A673 (cell line): ENCODE measurements at regions of chr7 and their contacts with region 1.

Region 1: GRCh38 chr7:158907390-158907789 is 51.0 kb downstream of the DYNC2I1 start:
- DNase-seq: no peak
- H3K4me3 ChIP-seq: no peak overlapping the region
- H3K27ac ChIP-seq: no peak overlapping the region
- H3K4me1 ChIP-seq: no peaks in the 10 kb centered on the region
- H3K27me3 ChIP-seq: no peaks in the 10 kb centered on the region
- CTCF ChIP-seq: no peak

Region 2: DNA sequence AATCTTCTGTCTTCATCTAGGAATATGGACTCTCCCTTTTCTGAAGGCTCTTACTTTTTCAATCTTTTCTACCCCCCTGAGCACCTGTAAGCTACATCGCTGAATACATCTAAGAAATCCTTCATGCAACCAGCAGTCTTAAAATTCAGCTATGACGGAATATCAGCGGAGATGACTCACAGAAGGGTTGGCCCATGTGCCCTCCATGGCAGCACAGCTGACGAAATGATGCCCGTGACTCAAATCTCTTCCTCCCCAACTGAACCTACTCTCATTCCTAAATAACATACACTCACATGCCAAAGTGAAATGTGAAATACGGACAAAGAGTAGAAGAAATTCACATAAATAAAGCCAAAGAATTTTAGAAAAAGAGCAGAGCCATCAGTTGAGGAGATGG is 172.5 kb before region 1 on chr7:
- CTCF ChIA-PET with region 1: no interaction called
- POLR2A ChIA-PET with region 1: interaction called, 19 read pairs
- intact Hi-C with region 1: no loop called
- DNase-seq: no peak
- H3K4me3 ChIP-seq: no peak overlapping the region
- H3K27ac ChIP-seq: no peak overlapping the region
- H3K4me1 ChIP-seq: peaks cover 11% of the 10 kb centered on the region
- H3K27me3 ChIP-seq: no peaks in the 10 kb centered on the region
- CTCF ChIP-seq: no peak

Region 3: GRCh38 chr7:158863611-158864506 is 43.5 kb before region 1 on chr7:
- CTCF ChIA-PET with region 1: no interaction called
- POLR2A ChIA-PET with region 1: no interaction called
- intact Hi-C with region 1: no loop called
- DNase-seq: peak; percentile 35
- H3K4me3 ChIP-seq: peak overlapping the region; percentile 42
- H3K27ac ChIP-seq: peak overlapping the region; percentile 63
- H3K4me1 ChIP-seq: peaks cover 3% of the 10 kb centered on the region
- H3K27me3 ChIP-seq: no peaks in the 10 kb centered on the region
- CTCF ChIP-seq: no peak

Region 4: GRCh38 chr7:159036916-159037605 is 129.7 kb after region 1 on chr7:
- CTCF ChIA-PET with region 1: no interaction called
- POLR2A ChIA-PET with region 1: no interaction called
- intact Hi-C with region 1: no loop called
- DNase-seq: no peak
- H3K4me3 ChIP-seq: no peak overlapping the region
- H3K27ac ChIP-seq: no peak overlapping the region
- H3K4me1 ChIP-seq: peaks cover 3% of the 10 kb centered on the region
- H3K27me3 ChIP-seq: peaks cover 5% of the 10 kb centered on the region
- CTCF ChIP-seq: no peak